HepG2 (cell line): ENCODE measurements at regions of chr3 and their contacts with region 1.

Region 1: DNA sequence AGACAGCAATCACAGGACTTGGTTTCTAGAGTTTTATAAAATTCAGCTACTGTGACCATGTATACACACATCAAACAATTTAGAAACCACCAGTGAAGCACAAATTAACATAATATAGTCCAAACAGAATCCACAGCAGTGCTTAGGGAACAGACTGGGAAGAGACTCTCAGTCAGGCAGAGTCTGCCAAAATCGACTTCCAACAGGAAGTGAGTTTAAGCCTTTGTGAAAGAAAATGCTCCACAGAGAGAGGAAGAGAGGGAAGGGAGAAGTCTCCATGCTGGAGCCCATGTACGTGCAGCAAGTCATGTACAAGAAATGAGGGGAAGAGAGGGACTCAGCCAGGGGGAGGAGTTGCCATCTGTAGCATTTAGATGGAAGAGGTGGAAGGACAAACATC is 172.6 kb downstream of the IL5RA start:
- DNase-seq: no peak
- ATAC-seq: no peak
- H3K4me3 ChIP-seq: no peak overlapping the region
- H3K27ac ChIP-seq: no peak overlapping the region
- H3K4me1 ChIP-seq: no peaks in the 10 kb centered on the region
- H3K27me3 ChIP-seq: peaks cover 0 to 1% of the 10 kb centered on the region in 2 experiments; a peak in 1 of 5 replicates
- CTCF ChIP-seq: no peak
- EP300 ChIP-seq: no peak
- POLR2A ChIP-seq: no peak
- RAD21 ChIP-seq: no peak

Region 2: GRCh38 chr3:2968475-2968874 is 30.9 kb after region 1 on chr3:
- CTCF ChIA-PET with region 1: no interaction called
- POLR2A ChIA-PET with region 1: no interaction called
- in situ Hi-C with region 1: no loop called
- intact Hi-C with region 1: loop called (anchors 1 kb)
- DNase-seq: no peak
- ATAC-seq: no peak
- H3K4me3 ChIP-seq: no peak overlapping the region
- H3K27ac ChIP-seq: no peak overlapping the region
- H3K4me1 ChIP-seq: no peaks in the 10 kb centered on the region
- H3K27me3 ChIP-seq: no peaks in the 10 kb centered on the region
- CTCF ChIP-seq: no peak
- EP300 ChIP-seq: no peak
- POLR2A ChIP-seq: no peak
- RAD21 ChIP-seq: no peak

Region 3: GRCh38 chr3:3005146-3005744 is 67.7 kb after region 1 on chr3:
- CTCF ChIA-PET with region 1: no interaction called
- POLR2A ChIA-PET with region 1: no interaction called
- in situ Hi-C with region 1: no loop called
- intact Hi-C with region 1: no loop called
- DNase-seq: no peak
- ATAC-seq: no peak
- H3K4me3 ChIP-seq: no peak overlapping the region
- H3K27ac ChIP-seq: no peak overlapping the region
- H3K4me1 ChIP-seq: no peaks in the 10 kb centered on the region
- H3K27me3 ChIP-seq: no peaks in the 10 kb centered on the region
- CTCF ChIP-seq: no peak
- EP300 ChIP-seq: no peak
- POLR2A ChIP-seq: no peak
- RAD21 ChIP-seq: no peak